ENCODE measurements at regions of chr14 and their contacts with region 1.

Region 1: DNA sequence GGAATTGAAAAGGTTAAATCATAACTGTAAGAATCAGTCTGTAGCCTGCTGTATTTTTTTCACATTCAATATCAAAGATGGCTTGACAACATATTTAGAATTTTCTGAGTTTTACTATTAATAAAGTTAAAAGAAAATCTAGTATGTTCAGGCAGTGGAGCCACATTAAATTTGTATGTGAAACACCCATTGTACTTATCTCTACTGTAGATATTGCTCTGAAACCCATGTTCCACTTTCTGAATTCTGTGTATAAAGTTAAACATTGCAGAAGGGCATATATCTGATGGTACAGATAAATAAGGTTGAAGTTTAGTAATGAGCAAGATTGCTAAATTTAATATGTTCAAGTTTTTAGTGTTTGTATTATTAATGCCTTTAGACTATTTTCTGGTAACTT is 172.7 kb downstream of the FOXA1 start:
- DNase-seq: no peak
- ATAC-seq: no peak
- H3K4me3 ChIP-seq: no peak overlapping the region
- H3K27ac ChIP-seq: no peak overlapping the region
- H3K4me1 ChIP-seq: no peaks in the 10 kb centered on the region
- H3K27me3 ChIP-seq: no peaks in the 10 kb centered on the region
- CTCF ChIP-seq: no peak
- POLR2A ChIP-seq: no peak
- RAD21 ChIP-seq: no peak

Region 2: GRCh38 chr14:37268788-37269187 is 153.5 kb before region 1 on chr14:
- CTCF ChIA-PET with region 1: no interaction called
- POLR2A ChIA-PET with region 1: no interaction called
- dilution Hi-C with region 1: no loop called
- in situ Hi-C with region 1: no loop called
- intact Hi-C with region 1: loop called (anchors 5 kb)
- DNase-seq: no peak
- ATAC-seq: no peak
- H3K4me3 ChIP-seq: no peak overlapping the region
- H3K27ac ChIP-seq: no peak overlapping the region
- H3K4me1 ChIP-seq: no peaks in the 10 kb centered on the region
- H3K27me3 ChIP-seq: no peaks in the 10 kb centered on the region
- CTCF ChIP-seq: no peak
- POLR2A ChIP-seq: no peak
- RAD21 ChIP-seq: no peak

Measured in IMR-90 (cell line).